H1 (cell line): ENCODE measurements at regions of chr7 and their contacts with region 1.

Region 1: DNA sequence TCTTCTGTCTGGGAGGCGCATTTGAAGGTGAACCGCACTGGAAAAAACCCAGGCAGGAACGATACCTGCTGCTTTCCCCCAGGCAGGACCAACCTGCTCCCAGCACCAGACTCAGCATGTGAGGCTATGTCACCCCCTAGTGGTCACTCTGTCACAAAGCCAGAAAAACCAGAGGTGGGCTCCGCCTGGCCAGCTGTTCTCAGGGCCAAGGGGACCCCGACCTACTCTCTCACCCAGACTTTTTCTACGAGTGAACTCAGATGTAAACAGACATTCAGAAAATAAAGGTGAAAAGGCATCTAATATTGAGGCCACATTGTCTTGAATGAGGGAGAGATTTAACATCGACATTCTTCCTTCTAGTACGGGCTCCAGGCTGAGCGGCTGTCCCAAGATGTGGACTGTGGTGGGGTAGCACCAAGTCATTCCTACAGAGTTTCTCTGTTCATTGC is 117.3 kb downstream of the PRKAG2 start:
- DNase-seq: peak; percentile 49 to 81
- H3K4me3 ChIP-seq: no peak overlapping the region
- H3K27ac ChIP-seq: no peak overlapping the region
- H3K4me1 ChIP-seq: peaks cover 2 to 10% (median 7%) of the 10 kb centered on the region in 4 experiments; a peak in 6 of 7 replicates
- H3K27me3 ChIP-seq: peaks cover 0 to 10% (median 5%) of the 10 kb centered on the region in 4 experiments; a peak in 4 of 7 replicates
- CTCF ChIP-seq: peak; percentile 82 to 92 (median 92)
- EP300 ChIP-seq: no peak
- POLR2A ChIP-seq: no peak
- RAD21 ChIP-seq: peak; percentile 95 to 96

Region 2: GRCh38 chr7:151570366-151570915 is 189.2 kb before region 1 on chr7:
- CTCF ChIA-PET with region 1: interaction called, 20 read pairs
- POLR2A ChIA-PET with region 1: no interaction called
- DNase-seq: no peak
- H3K4me3 ChIP-seq: no peak overlapping the region
- H3K27ac ChIP-seq: no peak overlapping the region
- H3K4me1 ChIP-seq: peaks cover 0 to 5% (median 2%) of the 10 kb centered on the region in 4 experiments; a peak in 3 of 7 replicates
- H3K27me3 ChIP-seq: no peaks in the 10 kb centered on the region
- CTCF ChIP-seq: peak in 1 of 3 experiments; percentile 26; a peak in 1 of 4 replicates
- EP300 ChIP-seq: no peak
- POLR2A ChIP-seq: no peak
- RAD21 ChIP-seq: peak in 1 of 2 experiments; percentile 54; a peak in 3 of 4 replicates

Region 3: GRCh38 chr7:151631968-151632749 is 127.5 kb before region 1 on chr7:
- CTCF ChIA-PET with region 1: interaction called, 107 read pairs
- POLR2A ChIA-PET with region 1: no interaction called
- DNase-seq: peak; percentile 41 to 88
- H3K4me3 ChIP-seq: peak overlapping the region; percentile 44 to 84 (median 78)
- H3K27ac ChIP-seq: no peak overlapping the region
- H3K4me1 ChIP-seq: peaks cover 2 to 17% (median 11%) of the 10 kb centered on the region in 4 experiments
- H3K27me3 ChIP-seq: peaks cover 0 to 25% (median 13%) of the 10 kb centered on the region in 4 experiments; a peak in 5 of 7 replicates
- CTCF ChIP-seq: peak in 2 of 3 experiments; percentile 30 to 36; a peak in 2 of 4 replicates
- EP300 ChIP-seq: peak in 1 of 2 experiments; percentile 47; a peak in 1 of 3 replicates
- POLR2A ChIP-seq: 0 out of 3 replicates have a peak, but pooled peaks of 1 of the 2 experiments have one; percentile 24
- RAD21 ChIP-seq: peak in 1 of 2 experiments; percentile 38; a peak in 1 of 4 replicates

Region 4: DNA sequence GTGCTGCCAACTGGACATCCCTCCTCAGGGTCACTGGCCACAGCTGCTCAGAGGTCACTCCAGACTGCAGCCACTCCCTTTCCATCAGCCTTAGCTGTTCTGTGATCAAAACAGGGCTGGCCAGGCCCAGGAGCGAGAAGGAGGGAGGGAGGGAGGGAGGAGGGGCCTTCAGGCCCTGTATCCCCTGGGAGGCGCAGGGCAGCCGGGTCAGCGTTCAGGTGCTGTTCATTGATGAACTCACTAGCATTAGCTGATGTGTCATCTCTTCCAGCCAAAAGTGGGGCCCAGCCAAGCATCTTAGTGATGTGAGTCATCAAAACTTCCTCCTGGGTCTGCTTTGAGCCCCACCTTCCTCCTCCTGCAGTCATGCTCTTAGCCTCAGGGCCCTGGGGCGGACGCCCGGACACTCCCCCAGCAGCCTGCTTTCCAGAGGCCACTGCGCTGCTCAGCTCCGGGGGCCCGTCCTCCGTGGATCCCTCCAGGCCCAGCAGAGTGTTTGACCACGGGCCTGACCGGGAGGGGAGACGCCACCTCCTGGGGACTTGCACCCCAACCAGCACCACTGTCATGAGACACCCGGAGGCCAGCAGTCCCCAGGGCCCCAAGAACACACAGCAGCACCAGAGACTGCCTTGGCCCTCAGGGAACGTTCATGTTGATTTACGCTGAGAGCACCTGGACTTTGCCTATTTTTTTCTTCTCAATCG is 31.9 kb before region 1 on chr7:
- CTCF ChIA-PET with region 1: interaction called, 29 read pairs
- POLR2A ChIA-PET with region 1: no interaction called
- DNase-seq: peak in 1 of 2 experiments; percentile 54
- H3K4me3 ChIP-seq: no peak overlapping the region
- H3K27ac ChIP-seq: no peak overlapping the region
- H3K4me1 ChIP-seq: peaks cover 0 to 3% (median 1%) of the 10 kb centered on the region in 4 experiments; a peak in 2 of 7 replicates
- H3K27me3 ChIP-seq: no peaks in the 10 kb centered on the region; a peak in 1 of 7 replicates
- CTCF ChIP-seq: no peak
- EP300 ChIP-seq: no peak
- POLR2A ChIP-seq: no peak
- RAD21 ChIP-seq: no peak

Region 5: DNA sequence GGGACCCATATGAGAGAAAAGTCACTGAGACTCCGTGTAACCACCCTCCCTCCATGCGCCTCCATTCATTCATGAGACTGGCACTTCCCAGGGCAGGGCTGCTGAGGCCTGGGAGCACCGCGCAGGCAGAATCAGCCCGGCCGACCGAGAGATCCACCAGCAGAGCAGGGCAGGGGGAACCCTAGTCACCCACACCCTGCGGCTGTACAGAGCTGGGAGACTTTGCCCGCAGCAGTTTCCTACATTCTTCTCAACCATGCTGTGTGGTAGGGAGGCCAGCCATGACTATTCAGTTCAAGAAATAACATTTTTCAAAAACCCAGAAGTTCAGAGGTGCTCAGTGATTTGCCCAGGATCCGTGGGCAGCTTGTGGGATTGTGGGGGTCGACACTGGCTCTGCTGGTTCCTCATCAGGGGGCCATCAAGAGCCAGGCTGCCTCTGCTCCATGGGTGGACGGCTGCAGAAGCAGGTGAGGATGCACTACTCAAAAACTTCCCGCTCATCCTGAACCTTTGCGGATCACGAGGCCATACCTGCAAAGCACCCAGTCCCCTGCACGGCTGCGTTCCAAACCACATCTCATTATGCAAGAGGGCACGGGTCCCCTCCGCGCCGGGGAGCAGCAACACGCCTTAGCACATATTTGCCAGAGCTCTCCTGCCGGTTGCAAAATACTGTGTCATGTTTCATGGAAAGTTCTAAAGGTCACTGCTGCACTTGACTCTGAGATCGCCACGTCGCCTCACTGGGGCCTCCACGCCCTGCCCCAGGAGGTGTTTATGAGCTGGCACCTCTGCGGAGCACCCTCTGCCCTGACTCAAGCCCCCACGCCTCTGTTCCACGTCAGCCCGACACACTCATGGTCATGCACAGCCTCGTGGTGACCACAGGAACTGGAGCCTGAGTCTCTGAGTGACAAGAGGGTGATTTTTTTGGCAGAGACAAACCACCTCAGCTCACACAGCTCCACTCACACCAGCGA is 14.7 kb before region 1 on chr7:
- CTCF ChIA-PET with region 1: interaction called, 17 read pairs
- POLR2A ChIA-PET with region 1: interaction called, 3 read pairs
- DNase-seq: no peak
- H3K4me3 ChIP-seq: no peak overlapping the region
- H3K27ac ChIP-seq: no peak overlapping the region
- H3K4me1 ChIP-seq: peaks cover 6 to 15% (median 10%) of the 10 kb centered on the region in 4 experiments; a peak in 6 of 7 replicates
- H3K27me3 ChIP-seq: no peaks in the 10 kb centered on the region
- CTCF ChIP-seq: no peak
- EP300 ChIP-seq: no peak
- POLR2A ChIP-seq: no peak
- RAD21 ChIP-seq: 0 out of 4 replicates have a peak, but pooled peaks of 1 of the 2 experiments have one; percentile 5

Region 6: DNA sequence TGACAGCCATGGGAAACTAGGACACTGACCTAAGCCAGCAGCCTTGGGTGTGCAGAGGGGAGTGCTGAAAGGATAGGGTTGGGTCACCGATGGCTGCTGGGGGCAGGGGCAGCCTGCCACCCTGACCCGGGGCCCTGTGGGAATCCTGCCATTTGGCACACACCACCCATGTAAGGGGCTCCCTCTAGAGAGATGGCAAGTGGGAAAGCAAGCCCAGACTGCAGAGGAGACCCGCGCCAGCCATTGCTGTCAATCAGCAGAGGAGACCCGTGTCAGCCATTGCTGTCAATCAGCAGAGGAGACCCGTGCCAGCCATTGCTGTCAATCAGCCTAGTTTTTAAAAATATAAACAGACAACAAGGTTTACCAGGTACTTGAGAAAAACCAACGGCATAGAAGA is 144.7 kb after region 1 on chr7:
- CTCF ChIA-PET with region 1: no interaction called
- POLR2A ChIA-PET with region 1: no interaction called
- DNase-seq: no peak
- H3K4me3 ChIP-seq: no peak overlapping the region
- H3K27ac ChIP-seq: no peak overlapping the region
- H3K4me1 ChIP-seq: no peaks in the 10 kb centered on the region
- H3K27me3 ChIP-seq: peaks cover 0 to 3% (median 0%) of the 10 kb centered on the region in 4 experiments; a peak in 3 of 7 replicates
- CTCF ChIP-seq: no peak
- EP300 ChIP-seq: no peak
- POLR2A ChIP-seq: no peak
- RAD21 ChIP-seq: no peak